Heart left ventricle (tissue), 16 donors: ENCODE measurements at regions of chr9 and their contacts with region 1.

Region 1: DNA sequence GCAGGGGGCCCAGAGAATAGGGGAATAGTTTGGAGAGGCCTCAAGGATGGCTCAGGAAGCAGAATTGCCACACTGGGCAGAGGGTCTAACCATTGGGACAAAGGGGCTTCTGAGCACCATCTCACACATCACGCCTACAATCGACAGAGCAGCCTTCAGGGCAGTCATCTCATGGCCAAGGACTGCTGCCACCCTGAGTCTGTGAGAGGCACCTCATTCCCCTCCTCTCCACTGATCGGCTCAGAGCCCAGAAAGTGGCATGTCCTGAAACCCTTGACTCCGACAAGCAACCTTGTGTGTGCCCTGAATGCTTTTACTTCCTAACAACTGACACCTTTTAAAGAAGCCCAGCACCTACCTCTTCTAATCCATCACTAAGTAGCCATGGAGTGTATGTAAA is 128.9 kb upstream of the PTPN3 start:
- DNase-seq: peak in 4 of 5 donors; percentile 33 to 60 (median 48)
- ATAC-seq: peak; percentile 83 to 96 (median 92)
- H3K4me3 ChIP-seq: no peak overlapping the region
- H3K27ac ChIP-seq: no peak overlapping the region
- H3K4me1 ChIP-seq: peaks cover 0 to 15% (median 2%) of the 10 kb centered on the region in 12 donors
- H3K27me3 ChIP-seq: no peaks in the 10 kb centered on the region
- CTCF ChIP-seq: peak in 3 of 12 donors; percentile 11 to 38 (median 36)
- POLR2A ChIP-seq: no peak

Region 2: GRCh38 chr9:109590945-109591344 is 36.1 kb before region 1 on chr9:
- intact Hi-C with region 1: loop called in 1 of 10 experiments (anchors 5 kb)
- DNase-seq: peak; percentile 38 to 77 (median 57)
- ATAC-seq: peak; percentile 21 to 74 (median 27)
- H3K4me3 ChIP-seq: no peak overlapping the region
- H3K27ac ChIP-seq: peak overlapping the region in 7 of 12 donors; percentile 22 to 75 (median 59)
- H3K4me1 ChIP-seq: peaks cover 0 to 21% (median 6%) of the 10 kb centered on the region in 12 donors
- H3K27me3 ChIP-seq: no peaks in the 10 kb centered on the region
- CTCF ChIP-seq: no peak
- POLR2A ChIP-seq: no peak